Ascending aorta (tissue), 2 donors: ENCODE measurements at regions of chr4 and their contacts with region 1.

Region 1: DNA sequence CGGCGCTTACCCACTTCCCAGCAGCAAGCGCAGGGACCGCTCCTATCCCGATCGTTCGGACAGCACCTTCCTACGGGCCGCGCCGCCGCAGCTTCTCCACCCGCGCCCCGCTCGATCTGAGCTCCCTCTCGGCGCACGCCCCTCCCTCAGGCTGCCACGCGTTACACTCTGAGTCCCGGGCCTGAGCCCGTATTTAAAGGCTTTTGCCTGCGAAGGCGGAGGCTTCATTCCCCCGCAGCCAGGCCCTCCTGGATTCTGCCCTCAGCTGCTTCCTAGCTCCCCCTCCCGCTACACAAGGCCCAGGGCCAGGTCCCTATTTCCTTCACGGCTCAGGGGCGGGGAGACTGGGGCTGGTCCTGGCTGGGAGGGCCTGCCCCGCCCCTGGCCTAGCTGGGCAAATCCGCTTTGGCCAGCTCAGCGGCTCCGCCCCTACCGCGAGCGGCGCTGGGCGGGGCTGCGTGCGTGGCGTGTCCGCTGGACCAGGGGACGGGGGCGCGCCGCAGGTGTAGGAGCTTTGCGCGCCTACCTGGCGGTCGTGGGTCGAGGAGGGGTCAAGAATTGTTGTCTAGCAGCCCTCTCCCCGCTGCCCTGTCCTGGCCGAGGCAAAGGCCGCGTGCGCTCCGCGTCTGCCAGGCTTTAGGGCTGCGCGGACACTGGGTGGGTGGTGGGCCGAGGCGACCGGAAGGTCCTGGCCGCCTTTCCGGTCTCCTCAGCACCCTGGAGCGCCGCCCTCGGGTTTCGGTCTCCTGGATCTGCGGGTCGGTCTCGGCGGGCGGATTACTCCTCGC is at the start of gene UGDH:
- DNase-seq: peak; percentile 89 to 98
- H3K4me3 ChIP-seq: peak within 1 kb of the TSS; percentile 56 to 100
- H3K27ac ChIP-seq: peak within 1 kb of the TSS; percentile 96 to 98
- H3K4me1 ChIP-seq: peaks cover 0 to 13% of the 10 kb centered on the region in 2 donors
- H3K27me3 ChIP-seq: no peaks in the 10 kb centered on the region
- CTCF ChIP-seq: peak in 2 of 3 experiments; percentile 14 to 16
- total RNA-seq, gene UGDH: 81.1 TPM

Region 2: GRCh38 chr4:39469429-39470077 is 57.9 kb before region 1 on chr4:
- intact Hi-C with region 1: loop called (anchors 2 kb)
- DNase-seq: peak in 1 of 2 donors; percentile 80
- H3K4me3 ChIP-seq: no peak overlapping the region
- H3K27ac ChIP-seq: no peak overlapping the region
- H3K4me1 ChIP-seq: no peaks in the 10 kb centered on the region
- H3K27me3 ChIP-seq: no peaks in the 10 kb centered on the region
- CTCF ChIP-seq: peak; percentile 82 to 85 (median 84)

Region 3: DNA sequence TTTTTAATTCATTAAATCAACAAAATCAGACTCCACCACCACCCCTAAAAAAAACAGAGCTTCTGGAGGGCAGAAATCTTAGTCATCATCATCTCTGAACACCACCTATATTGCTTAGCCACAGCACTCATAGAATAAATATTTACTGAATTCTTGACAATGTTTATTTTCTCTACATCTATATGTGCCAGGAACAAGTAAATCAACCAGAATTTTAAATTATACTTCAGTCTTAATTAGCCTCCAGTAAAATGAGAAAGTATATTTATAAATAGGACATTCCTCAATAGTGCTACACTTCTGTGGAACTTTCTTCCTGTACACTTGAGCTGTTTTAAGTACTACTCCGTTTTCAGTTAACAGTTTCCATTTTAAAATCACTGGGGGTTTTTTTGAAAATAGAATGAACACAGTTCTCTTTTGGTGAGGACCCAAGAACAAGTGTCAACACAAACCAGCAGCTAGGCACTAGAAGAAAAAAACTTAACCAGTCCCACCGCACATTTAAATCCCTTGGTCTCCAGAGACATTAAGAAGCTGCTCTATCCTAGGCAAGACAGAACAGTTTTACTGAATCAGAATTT is 85.7 kb after region 1 on chr4:
- intact Hi-C with region 1: loop called (anchors 2 kb)
- DNase-seq: no peak
- H3K4me3 ChIP-seq: peak overlapping the region in 1 of 2 donors; percentile 35
- H3K27ac ChIP-seq: peak overlapping the region; percentile 78 to 86
- H3K4me1 ChIP-seq: peaks cover 2 to 41% of the 10 kb centered on the region in 2 donors
- H3K27me3 ChIP-seq: no peaks in the 10 kb centered on the region
- CTCF ChIP-seq: no peak

Region 4: GRCh38 chr4:39697740-39698423 is 170.4 kb after region 1 on chr4 and contains the start of gene UBE2K:
- intact Hi-C with region 1: loop called (anchors 2 kb)
- DNase-seq: peak; percentile 50 to 94
- H3K4me3 ChIP-seq: peak within 1 kb of the TSS; percentile 88 to 92
- H3K27ac ChIP-seq: peak within 1 kb of the TSS; percentile 91 to 92
- H3K4me1 ChIP-seq: peaks cover 0 to 7% of the 10 kb centered on the region in 2 donors
- H3K27me3 ChIP-seq: no peaks in the 10 kb centered on the region
- CTCF ChIP-seq: peak in 1 of 3 experiments; percentile 6
- total RNA-seq, gene UBE2K: 9.7 TPM

Region 5: GRCh38 chr4:40056716-40057585 is 529.5 kb after region 1 on chr4 and contains the start of gene N4BP2:
- intact Hi-C with region 1: loop called (anchors 5 kb)
- DNase-seq: peak; percentile 21 to 88
- H3K4me3 ChIP-seq: peak within 1 kb of the TSS; percentile 72 to 98
- H3K27ac ChIP-seq: peak within 1 kb of the TSS; percentile 97 to 100
- H3K4me1 ChIP-seq: peaks cover 0 to 11% of the 10 kb centered on the region in 2 donors
- H3K27me3 ChIP-seq: no peaks in the 10 kb centered on the region
- CTCF ChIP-seq: peak; percentile 47 to 77 (median 74)
- total RNA-seq, gene N4BP2: 0.53 TPM

Region 6: DNA sequence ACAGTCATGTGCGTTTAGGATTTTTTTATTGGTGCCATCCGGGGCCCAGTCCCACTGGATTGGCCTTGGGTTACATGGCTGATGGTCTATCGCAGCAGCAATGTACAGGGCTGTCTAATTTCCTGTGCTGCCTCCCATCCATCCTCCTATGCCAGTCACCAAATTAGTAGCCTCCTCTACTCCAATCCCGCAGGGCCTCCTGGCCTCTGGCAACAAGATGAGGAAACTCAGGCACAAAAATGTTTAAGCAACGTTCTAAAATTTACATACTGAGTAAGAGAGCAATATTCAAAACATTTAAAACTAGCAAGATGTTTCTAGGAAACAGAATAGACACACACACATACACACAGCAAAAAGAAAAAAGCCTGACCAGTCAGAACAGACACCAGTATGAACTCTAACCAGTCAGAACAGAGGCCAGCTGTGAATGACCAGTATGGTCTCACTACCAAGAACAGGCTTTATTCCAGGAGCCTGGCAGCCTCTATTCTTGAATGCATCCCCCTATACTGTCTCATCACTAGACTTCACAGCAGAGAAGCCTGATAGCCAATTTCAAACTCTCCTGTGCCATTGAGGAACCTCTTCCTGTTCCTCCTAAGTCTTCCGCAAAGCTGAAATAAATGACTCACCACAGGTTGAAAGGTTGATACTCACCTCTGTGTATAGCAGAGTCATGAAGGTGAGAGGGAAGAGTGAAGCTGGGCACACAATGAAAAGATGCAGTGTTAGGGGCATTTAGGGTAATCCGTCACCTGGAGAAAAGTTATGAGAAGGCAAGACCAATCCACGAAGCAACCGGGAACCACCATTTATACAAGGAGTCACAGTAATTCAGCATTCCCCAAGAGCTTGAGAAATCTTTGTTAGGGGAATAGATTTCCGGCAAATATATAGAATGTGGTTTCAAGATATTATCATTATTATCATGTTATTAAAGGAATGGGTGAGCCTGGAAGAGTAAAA is 850.4 kb after region 1 on chr4:
- intact Hi-C with region 1: no loop called
- DNase-seq: no peak
- H3K4me3 ChIP-seq: no peak overlapping the region
- H3K27ac ChIP-seq: no peak overlapping the region
- H3K4me1 ChIP-seq: no peaks in the 10 kb centered on the region
- H3K27me3 ChIP-seq: no peaks in the 10 kb centered on the region
- CTCF ChIP-seq: no peak